Sigmoid colon (tissue), 7 donors: ENCODE measurements at regions of chr9 and their contacts with region 1.

Region 1: GRCh38 chr9:715743-716400 is 125.6 kb upstream of the DMRT1 start:
- DNase-seq: no peak
- H3K4me3 ChIP-seq: no peak overlapping the region
- H3K27ac ChIP-seq: peak overlapping the region; percentile 75 to 90 (median 81)
- H3K4me1 ChIP-seq: peaks cover 0 to 93% (median 78%) of the 10 kb centered on the region in 4 donors
- H3K27me3 ChIP-seq: no peaks in the 10 kb centered on the region
- CTCF ChIP-seq: no peak
- EP300 ChIP-seq: peak; percentile 77 to 99 (median 96)
- POLR2A ChIP-seq: no peak

Region 2: DNA sequence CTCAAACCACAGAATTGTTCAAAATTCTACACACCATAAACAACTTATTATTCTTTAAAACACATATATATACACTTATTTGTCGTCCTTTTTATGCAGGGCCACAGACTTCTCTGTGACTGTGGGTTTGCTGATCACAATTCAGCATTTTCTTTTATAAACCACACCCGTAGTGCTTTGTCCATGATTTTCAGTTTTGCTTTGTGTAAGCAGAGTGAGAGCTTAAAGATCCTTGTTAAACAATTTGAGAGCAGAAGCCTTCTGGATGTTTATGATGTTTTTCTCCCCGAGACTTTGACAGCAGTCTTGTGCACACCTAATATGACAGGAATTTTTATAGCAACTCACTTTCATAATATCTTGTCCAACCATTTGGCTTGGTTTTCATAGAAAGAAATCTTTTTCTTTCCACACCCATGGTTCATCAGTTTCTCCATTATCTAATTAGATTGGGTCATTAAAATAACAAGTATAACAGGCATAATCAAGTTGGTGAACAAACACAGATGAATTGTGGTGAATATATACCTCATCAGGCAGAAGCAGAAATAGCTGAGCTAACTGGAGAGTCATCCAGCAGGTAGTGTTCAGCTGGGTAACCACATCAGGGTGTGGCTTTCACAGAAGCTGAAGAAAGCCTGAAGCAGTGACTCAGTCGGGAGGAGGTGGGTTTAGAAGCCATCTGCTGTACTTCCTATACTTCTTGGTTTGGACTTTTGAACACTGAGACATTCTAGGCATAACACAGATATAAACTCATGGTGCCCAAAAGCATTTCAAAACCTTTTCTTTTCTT is 268.4 kb before region 1 on chr9:
- intact Hi-C with region 1: no loop called
- DNase-seq: no peak
- H3K4me3 ChIP-seq: no peak overlapping the region
- H3K27ac ChIP-seq: no peak overlapping the region
- H3K4me1 ChIP-seq: peaks cover 0 to 11% (median 4%) of the 10 kb centered on the region in 4 donors
- H3K27me3 ChIP-seq: no peaks in the 10 kb centered on the region
- CTCF ChIP-seq: no peak
- EP300 ChIP-seq: no peak
- POLR2A ChIP-seq: no peak

Region 3: GRCh38 chr9:693201-694091 is 22.4 kb before region 1 on chr9:
- intact Hi-C with region 1: loop called (anchors 2 kb)
- DNase-seq: peak; percentile 93
- H3K4me3 ChIP-seq: peak overlapping the region; percentile 12 to 41 (median 33)
- H3K27ac ChIP-seq: peak overlapping the region; percentile 80 to 96 (median 91)
- H3K4me1 ChIP-seq: peaks cover 0 to 86% (median 68%) of the 10 kb centered on the region in 4 donors
- H3K27me3 ChIP-seq: no peaks in the 10 kb centered on the region
- CTCF ChIP-seq: no peak
- EP300 ChIP-seq: peak; percentile 65 to 94 (median 82)
- POLR2A ChIP-seq: peak in 1 of 2 donors; percentile 39

Region 4: DNA sequence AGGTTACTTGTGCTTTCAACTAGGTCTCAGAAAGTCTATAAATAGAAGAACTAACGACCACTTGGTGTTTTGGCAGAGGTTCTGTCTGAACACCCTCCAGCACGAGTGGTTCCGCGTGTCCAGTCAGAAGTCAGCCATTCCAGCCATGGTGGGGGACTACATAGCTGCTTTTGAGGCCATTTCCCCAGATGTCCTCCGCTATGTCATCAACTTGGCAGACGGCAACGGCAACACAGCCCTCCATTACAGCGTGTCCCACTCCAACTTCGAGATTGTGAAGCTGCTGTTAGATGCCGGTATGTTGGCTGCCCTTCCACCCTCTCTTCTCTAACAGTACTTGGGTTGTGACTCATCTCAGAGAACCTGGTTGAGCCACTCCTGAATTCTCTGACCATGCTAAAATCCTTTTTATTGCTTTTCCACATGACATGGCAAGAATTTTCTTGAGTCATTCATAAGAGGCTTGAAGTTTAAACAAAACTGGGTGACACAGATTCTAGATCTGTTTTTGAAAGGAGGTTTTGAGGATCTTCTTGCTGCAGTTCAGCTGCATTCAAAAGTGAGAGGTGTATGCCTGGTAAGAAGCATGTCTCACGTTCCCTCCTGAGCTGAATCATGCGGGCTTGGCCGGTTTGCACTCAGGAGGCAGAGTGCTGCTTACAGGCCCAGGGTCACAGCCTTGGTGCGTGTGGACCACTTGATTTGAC is 22.5 kb after region 1 on chr9:
- intact Hi-C with region 1: no loop called
- DNase-seq: peak; percentile 93
- H3K4me3 ChIP-seq: no peak overlapping the region
- H3K27ac ChIP-seq: peak overlapping the region; percentile 80 to 96 (median 90)
- H3K4me1 ChIP-seq: peaks cover 0 to 86% (median 64%) of the 10 kb centered on the region in 4 donors
- H3K27me3 ChIP-seq: no peaks in the 10 kb centered on the region
- CTCF ChIP-seq: no peak
- EP300 ChIP-seq: peak in 3 of 4 donors; percentile 40 to 75 (median 70)
- POLR2A ChIP-seq: no peak